A549 (cell line): ENCODE measurements at regions of chr15 and their contacts with region 1.

Region 1: GRCh38 chr15:75367913-75368688 is at the start of gene MAN2C1:
- DNase-seq: peak; percentile 98 to 99
- ATAC-seq: peak; percentile 90 to 93
- H3K4me3 ChIP-seq: peak within 1 kb of the TSS; percentile 81
- H3K27ac ChIP-seq: peak within 1 kb of the TSS; percentile 93 to 95
- H3K4me1 ChIP-seq: peaks cover 21% of the 10 kb centered on the region
- CTCF ChIP-seq: peak; percentile 95
- EP300 ChIP-seq: no peak
- POLR2A ChIP-seq: peak; percentile 98
- RAD21 ChIP-seq: peak; percentile 73 to 79
- polyA plus RNA-seq, gene MAN2C1: 47.7 and 66.3 TPM in 2 replicates

Region 2: DNA sequence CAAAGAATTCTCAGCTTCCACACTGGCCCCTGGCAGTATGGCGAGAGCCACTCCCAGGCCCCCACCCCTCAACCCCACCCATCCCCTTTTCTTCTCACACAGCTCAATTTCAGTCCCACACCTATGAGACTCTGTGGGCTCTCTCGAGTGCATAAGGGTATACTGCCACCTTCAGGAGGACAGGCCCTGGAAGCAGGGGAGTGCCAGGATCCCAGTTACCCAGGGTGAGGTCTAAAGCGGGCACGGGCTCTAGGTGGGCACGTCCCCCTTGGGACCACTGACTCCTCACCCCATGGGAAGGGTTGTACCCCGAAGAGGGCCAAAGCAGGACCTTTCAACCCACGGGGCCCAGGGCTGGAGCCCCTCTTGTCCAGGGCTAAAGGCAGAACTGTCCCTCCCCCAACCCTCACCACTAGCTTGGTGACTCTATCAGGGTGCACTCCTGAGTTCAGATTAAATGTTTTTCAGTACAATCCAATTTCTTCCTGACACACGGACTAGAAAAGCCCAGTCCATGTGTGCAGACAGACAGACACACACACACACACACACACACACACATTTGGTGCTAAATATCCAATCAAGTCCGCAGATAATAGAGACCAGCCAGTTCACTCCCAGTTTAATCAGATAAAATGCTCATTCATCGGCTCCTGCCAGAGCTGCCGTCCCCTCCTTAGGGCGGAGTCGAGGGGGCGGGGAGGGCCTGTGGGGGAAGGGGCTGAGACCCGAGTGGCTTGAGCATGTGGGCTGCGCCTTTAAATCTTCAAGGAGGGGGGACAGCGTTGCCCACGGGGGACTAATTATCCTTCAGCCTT is 1060.1 kb before region 1 on chr15:
- CTCF ChIA-PET with region 1: no interaction called
- POLR2A ChIA-PET with region 1: no interaction called
- DNase-seq: peak; percentile 61 to 83
- ATAC-seq: peak; percentile 88 to 94
- H3K4me3 ChIP-seq: no peak overlapping the region
- H3K27ac ChIP-seq: peak overlapping the region in 1 of 2 experiments; percentile 62; a peak in 2 of 6 replicates
- H3K4me1 ChIP-seq: peaks cover 18% of the 10 kb centered on the region
- CTCF ChIP-seq: peak; percentile 67
- EP300 ChIP-seq: no peak
- POLR2A ChIP-seq: no peak
- RAD21 ChIP-seq: peak; percentile 85 to 87

Region 3: GRCh38 chr15:75347222-75347878 is 20.8 kb before region 1 on chr15:
- CTCF ChIA-PET with region 1: interaction called, 72 read pairs
- POLR2A ChIA-PET with region 1: interaction called, 13 read pairs
- DNase-seq: peak in 1 of 2 experiments; percentile 55
- ATAC-seq: peak; percentile 28 to 62; a peak in 5 of 6 replicates
- H3K4me3 ChIP-seq: peak overlapping the region; percentile 91
- H3K27ac ChIP-seq: peak overlapping the region; percentile 95 to 96
- H3K4me1 ChIP-seq: peaks cover 4% of the 10 kb centered on the region; the same call in 1 of the 3 replicates
- CTCF ChIP-seq: no peak
- EP300 ChIP-seq: no peak
- POLR2A ChIP-seq: no peak
- RAD21 ChIP-seq: no peak

Region 4: GRCh38 chr15:75389791-75390382 is 21.8 kb after region 1 on chr15:
- CTCF ChIA-PET with region 1: interaction called, 25 read pairs
- POLR2A ChIA-PET with region 1: interaction called, 11 read pairs
- DNase-seq: peak in 1 of 2 experiments; percentile 60
- ATAC-seq: peak; percentile 45 to 55; a peak in 4 of 6 replicates
- H3K4me3 ChIP-seq: no peak overlapping the region
- H3K27ac ChIP-seq: peak overlapping the region; percentile 41 to 75
- H3K4me1 ChIP-seq: peaks cover 21% of the 10 kb centered on the region
- CTCF ChIP-seq: no peak
- EP300 ChIP-seq: no peak
- POLR2A ChIP-seq: no peak
- RAD21 ChIP-seq: no peak

Region 5: DNA sequence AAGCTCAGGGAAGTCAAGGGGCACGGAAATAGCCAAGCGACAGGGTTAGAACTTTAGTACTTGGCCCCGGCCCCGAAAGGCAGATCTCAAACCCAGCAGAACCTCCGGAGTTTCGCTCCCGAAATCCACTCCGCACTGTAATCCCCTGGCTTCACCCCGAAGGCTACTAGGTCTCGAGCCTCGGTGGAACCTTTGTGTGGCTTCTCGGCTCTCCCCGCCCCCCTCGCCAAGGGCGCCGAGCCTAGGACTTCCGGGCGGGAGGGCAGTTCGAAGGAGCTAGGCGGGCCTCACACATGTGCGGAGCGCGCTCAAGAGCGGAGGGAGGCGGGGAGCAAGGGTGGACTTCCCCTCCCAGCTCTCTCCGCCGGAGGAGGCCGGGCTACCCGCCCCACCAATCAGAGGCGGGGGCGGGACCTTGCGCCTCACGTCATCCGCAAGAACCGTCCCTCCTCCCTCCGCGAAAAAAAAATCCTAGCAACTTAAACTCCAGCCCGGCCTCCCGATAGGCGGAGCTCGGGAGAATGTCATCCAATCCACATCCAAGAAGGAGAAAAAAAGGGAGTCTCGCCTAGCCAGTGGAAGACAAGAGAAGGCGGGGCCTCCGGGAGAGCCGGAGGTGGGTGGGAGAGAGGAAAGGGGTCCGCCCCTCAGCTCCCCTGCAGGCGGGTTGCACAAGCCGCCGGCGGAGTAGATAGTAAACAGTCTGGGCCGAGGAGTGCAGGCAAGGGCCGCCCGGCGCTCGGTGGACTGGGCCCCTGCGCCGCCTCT is 85.8 kb after region 1 on chr15:
- CTCF ChIA-PET with region 1: interaction called, 49 read pairs
- POLR2A ChIA-PET with region 1: interaction called, 148 read pairs
- DNase-seq: peak; percentile 99 to 100
- ATAC-seq: peak; percentile 22 to 57
- H3K4me3 ChIP-seq: peak overlapping the region; percentile 74
- H3K27ac ChIP-seq: peak overlapping the region; percentile 92
- H3K4me1 ChIP-seq: peaks cover 18% of the 10 kb centered on the region
- CTCF ChIP-seq: no peak
- EP300 ChIP-seq: no peak
- POLR2A ChIP-seq: peak; percentile 53
- RAD21 ChIP-seq: no peak; a peak in 1 of 5 replicates

Region 6: GRCh38 chr15:75639709-75640482 is 271.8 kb after region 1 on chr15 and contains the start of gene IMP3:
- CTCF ChIA-PET with region 1: interaction called, 51 read pairs
- POLR2A ChIA-PET with region 1: interaction called, 66 read pairs
- DNase-seq: peak; percentile 99
- ATAC-seq: peak; percentile 89 to 95
- H3K4me3 ChIP-seq: peak within 1 kb of the TSS; percentile 67
- H3K27ac ChIP-seq: peak within 1 kb of the TSS; percentile 91 to 94
- H3K4me1 ChIP-seq: peaks cover 18% of the 10 kb centered on the region
- CTCF ChIP-seq: no peak
- EP300 ChIP-seq: no peak
- POLR2A ChIP-seq: peak; percentile 96
- RAD21 ChIP-seq: no peak
- polyA plus RNA-seq, gene IMP3: 80.6 and 94.7 TPM in 2 replicates